Endothelial cell of umbilical vein (primary cell): ENCODE measurements at regions of chr18 and their contacts with region 1.

Region 1: GRCh38 chr18:79679111-79679872 is at the start of gene CTDP1:
- DNase-seq: peak; percentile 99
- H3K4me3 ChIP-seq: peak within 1 kb of the TSS; percentile 82 to 99 (median 83)
- H3K27ac ChIP-seq: peak within 1 kb of the TSS; percentile 73
- H3K4me1 ChIP-seq: peaks cover 16% of the 10 kb centered on the region
- H3K27me3 ChIP-seq: no peaks in the 10 kb centered on the region
- CTCF ChIP-seq: no peak
- POLR2A ChIP-seq: peak; percentile 25
- total RNA-seq, gene CTDP1: 23.5 and 27.6 TPM in 2 replicates

Region 2: GRCh38 chr18:79786786-79787526 is 107.7 kb after region 1 on chr18:
- CTCF ChIA-PET with region 1: no interaction called
- POLR2A ChIA-PET with region 1: no interaction called
- dilution Hi-C with region 1: no loop called
- intact Hi-C with region 1: no loop called
- DNase-seq: no peak
- H3K4me3 ChIP-seq: no peak overlapping the region
- H3K27ac ChIP-seq: no peak overlapping the region
- H3K4me1 ChIP-seq: no peaks in the 10 kb centered on the region
- H3K27me3 ChIP-seq: peaks cover 15 to 18% of the 10 kb centered on the region in 2 experiments
- CTCF ChIP-seq: no peak
- POLR2A ChIP-seq: no peak

Region 3: GRCh38 chr18:80034068-80034851 is 355.0 kb after region 1 on chr18 and contains the start of gene RBFA:
- CTCF ChIA-PET with region 1: interaction called, 6 read pairs
- POLR2A ChIA-PET with region 1: interaction called, 3 read pairs
- dilution Hi-C with region 1: no loop called
- intact Hi-C with region 1: loop called (anchors 1 kb)
- DNase-seq: peak; percentile 99
- H3K4me3 ChIP-seq: peak within 1 kb of the TSS; percentile 94 to 97 (median 96)
- H3K27ac ChIP-seq: peak within 1 kb of the TSS; percentile 39
- H3K4me1 ChIP-seq: peaks cover 9% of the 10 kb centered on the region
- H3K27me3 ChIP-seq: no peaks in the 10 kb centered on the region
- CTCF ChIP-seq: peak; percentile 32 to 49
- POLR2A ChIP-seq: peak; percentile 85
- total RNA-seq, gene RBFA: 30.5 and 34.8 TPM in 2 replicates